ENCODE measurements at regions of chr6 and their contacts with region 1.

Region 1: GRCh38 chr6:26122793-26123674 is 35.8 kb downstream of the HFE start:
- DNase-seq: peak; percentile 98
- H3K4me3 Mint-ChIP-seq: peak overlapping the region; percentile 100
- H3K27ac Mint-ChIP-seq: peak overlapping the region; percentile 99
- H3K4me1 Mint-ChIP-seq: peaks cover 35% of the 10 kb centered on the region
- H3K27me3 Mint-ChIP-seq: peaks cover 4% of the 10 kb centered on the region

Region 2: GRCh38 chr6:26045065-26045927 is 77.7 kb before region 1 on chr6:
- CTCF ChIA-PET with region 1: no interaction called
- POLR2A ChIA-PET with region 1: interaction called, 28 read pairs
- DNase-seq: peak; percentile 93
- H3K4me3 Mint-ChIP-seq: peak overlapping the region; percentile 83
- H3K27ac Mint-ChIP-seq: peak overlapping the region; percentile 99
- H3K4me1 Mint-ChIP-seq: peaks cover 44% of the 10 kb centered on the region
- H3K27me3 Mint-ChIP-seq: no peaks in the 10 kb centered on the region

Region 3: GRCh38 chr6:26156076-26156849 is 33.2 kb after region 1 on chr6:
- CTCF ChIA-PET with region 1: interaction called, 20 read pairs
- POLR2A ChIA-PET with region 1: interaction called, 499 read pairs
- DNase-seq: peak; percentile 90
- H3K4me3 Mint-ChIP-seq: peak overlapping the region; percentile 92
- H3K27ac Mint-ChIP-seq: peak overlapping the region; percentile 97
- H3K4me1 Mint-ChIP-seq: peaks cover 39% of the 10 kb centered on the region
- H3K27me3 Mint-ChIP-seq: peaks cover 3% of the 10 kb centered on the region

Region 4: DNA sequence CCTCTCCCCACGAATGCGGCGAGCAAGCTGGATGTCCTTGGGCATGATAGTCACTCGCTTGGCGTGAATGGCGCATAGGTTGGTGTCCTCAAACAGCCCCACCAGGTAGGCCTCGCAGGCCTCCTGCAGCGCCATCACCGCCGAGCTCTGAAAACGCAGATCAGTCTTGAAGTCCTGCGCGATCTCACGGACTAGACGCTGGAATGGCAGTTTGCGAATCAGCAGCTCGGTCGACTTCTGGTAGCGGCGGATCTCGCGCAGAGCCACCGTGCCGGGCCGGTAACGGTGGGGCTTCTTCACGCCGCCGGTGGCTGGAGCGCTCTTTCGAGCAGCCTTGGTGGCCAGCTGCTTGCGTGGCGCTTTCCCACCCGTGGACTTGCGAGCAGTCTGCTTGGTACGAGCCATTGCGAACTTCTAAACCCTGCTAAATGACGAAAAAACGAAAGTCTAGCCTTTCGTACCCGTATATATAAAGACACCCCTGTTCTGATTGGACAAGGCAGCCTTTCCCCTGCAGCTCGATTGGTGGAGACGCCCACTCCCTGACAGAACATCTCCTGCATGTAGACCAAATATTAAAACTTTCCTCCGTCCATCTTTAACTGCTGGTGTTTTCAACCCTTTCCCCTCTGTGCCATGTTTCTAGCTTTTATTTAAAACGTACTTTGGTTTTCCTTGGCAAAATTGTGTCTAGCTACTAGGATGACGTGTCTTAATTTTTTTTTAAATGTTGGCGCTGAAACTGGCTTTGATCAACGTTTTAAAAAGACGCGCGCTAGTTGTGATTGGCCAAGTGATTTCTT is 74.0 kb after region 1 on chr6:
- CTCF ChIA-PET with region 1: interaction called, 13 read pairs
- POLR2A ChIA-PET with region 1: interaction called, 108 read pairs
- DNase-seq: peak; percentile 91
- H3K4me3 Mint-ChIP-seq: peak overlapping the region; percentile 99
- H3K27ac Mint-ChIP-seq: peak overlapping the region; percentile 98
- H3K4me1 Mint-ChIP-seq: peaks cover 44% of the 10 kb centered on the region
- H3K27me3 Mint-ChIP-seq: no peaks in the 10 kb centered on the region

Region 5: DNA sequence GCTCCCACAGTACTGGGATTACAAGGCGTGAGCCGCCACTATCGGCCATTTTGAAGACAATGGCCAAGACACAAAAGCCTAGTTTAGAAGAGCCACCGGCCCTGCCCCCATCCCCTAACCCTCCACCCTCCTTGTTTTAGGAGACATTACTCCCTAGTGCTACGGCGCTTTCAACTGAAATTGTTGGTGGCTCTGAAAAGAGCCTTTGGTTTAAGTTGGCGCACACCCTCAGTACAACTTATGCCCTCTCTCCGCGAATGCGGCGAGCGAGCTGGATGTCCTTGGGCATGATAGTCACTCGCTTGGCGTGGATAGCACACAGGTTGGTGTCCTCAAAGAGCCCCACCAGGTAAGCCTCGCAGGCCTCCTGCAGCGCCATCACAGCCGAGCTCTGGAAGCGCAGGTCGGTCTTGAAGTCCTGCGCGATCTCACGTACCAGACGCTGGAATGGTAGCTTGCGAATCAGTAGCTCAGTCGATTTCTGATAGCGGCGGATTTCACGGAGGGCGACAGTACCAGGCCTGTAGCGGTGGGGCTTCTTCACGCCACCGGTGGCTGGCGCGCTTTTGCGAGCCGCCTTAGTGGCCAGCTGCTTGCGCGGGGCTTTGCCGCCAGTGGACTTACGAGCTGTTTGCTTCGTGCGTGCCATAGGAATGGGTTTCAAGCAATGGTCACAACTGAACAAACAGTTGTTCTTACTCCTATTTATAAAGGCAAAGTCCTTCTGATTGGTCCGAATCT is 127.1 kb after region 1 on chr6:
- CTCF ChIA-PET with region 1: no interaction called
- POLR2A ChIA-PET with region 1: interaction called, 30 read pairs
- DNase-seq: peak; percentile 82
- H3K4me3 Mint-ChIP-seq: peak overlapping the region; percentile 98
- H3K27ac Mint-ChIP-seq: peak overlapping the region; percentile 100
- H3K4me1 Mint-ChIP-seq: peaks cover 40% of the 10 kb centered on the region
- H3K27me3 Mint-ChIP-seq: no peaks in the 10 kb centered on the region

Region 6: DNA sequence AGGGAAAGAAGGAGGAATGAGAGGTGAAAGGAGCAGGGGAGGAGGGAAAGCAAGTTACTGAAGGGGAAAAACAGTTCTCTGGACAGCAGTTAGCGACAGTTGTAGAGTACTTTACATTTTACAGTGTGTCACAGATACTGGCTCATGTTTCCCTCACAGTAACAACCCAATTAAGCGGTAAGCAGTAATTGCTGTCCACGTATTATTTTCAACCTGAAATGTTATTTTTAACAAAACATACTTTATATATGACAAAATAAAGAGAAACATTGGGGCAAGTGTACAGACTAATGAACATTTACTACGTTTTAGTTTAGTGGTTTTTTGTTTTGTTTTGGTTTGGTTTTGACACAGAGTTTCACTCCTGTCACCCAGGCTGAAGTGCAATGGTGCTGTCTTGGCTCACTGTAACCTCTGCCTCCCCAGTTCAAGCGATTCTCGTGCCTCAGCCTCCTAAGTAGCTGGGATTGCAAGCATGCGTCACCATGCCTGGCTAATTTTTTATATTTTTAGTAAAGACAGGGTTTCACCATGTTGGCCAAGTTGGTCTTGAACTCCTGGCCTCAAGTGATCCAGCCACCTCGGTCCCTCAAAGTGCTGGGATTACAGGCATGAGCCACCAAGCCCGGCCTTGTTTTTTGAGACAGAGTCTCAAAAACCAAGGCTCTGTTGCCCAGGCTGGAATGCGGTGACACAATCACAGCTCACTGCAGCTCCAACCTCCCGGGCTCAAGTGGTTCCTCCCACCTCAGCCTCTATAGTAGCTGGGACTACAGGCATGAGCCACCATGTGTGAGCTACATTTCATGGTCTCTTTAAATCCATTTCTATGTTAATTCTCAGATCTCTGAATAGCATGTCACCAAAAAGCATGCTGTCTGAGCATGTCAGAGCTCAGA is 219.3 kb after region 1 on chr6:
- CTCF ChIA-PET with region 1: no interaction called
- POLR2A ChIA-PET with region 1: no interaction called
- DNase-seq: no peak
- H3K4me3 Mint-ChIP-seq: peak overlapping the region; percentile 70
- H3K27ac Mint-ChIP-seq: peak overlapping the region; percentile 85
- H3K4me1 Mint-ChIP-seq: peaks cover 20% of the 10 kb centered on the region
- H3K27me3 Mint-ChIP-seq: peaks cover 18% of the 10 kb centered on the region

Region 7: GRCh38 chr6:27809939-27810767 is 1687.1 kb after region 1 on chr6:
- CTCF ChIA-PET with region 1: no interaction called
- POLR2A ChIA-PET with region 1: interaction called, 10 read pairs
- DNase-seq: peak; percentile 89
- H3K4me3 Mint-ChIP-seq: peak overlapping the region; percentile 86
- H3K27ac Mint-ChIP-seq: peak overlapping the region; percentile 99
- H3K4me1 Mint-ChIP-seq: peaks cover 65% of the 10 kb centered on the region
- H3K27me3 Mint-ChIP-seq: no peaks in the 10 kb centered on the region